ENCODE measurements at regions of chr13 and their contacts with region 1.

Region 1: GRCh38 chr13:99269627-99270241 is 11.6 kb upstream of the GPR18 start:
- DNase-seq: no peak

Region 2: DNA sequence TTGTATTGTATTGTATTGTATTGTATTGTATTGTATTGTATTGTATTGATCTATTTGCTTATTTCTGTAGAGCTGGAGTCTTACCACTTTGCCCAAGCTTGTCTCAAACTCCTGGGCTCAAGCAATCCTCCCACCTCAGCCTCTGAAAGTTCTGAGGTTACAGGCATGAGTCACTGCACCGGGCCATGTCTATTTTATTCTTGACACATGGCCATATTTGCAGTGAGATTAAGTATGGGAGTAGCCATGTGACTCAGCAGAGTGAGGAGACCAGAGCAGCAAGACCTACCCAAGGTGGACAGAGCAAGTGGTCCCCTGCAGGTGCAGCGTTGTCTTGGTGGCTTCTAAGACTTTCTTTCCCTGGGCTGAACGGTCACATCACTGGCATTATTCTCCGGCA is 118.2 kb before region 1 on chr13:
- intact Hi-C with region 1: no loop called
- DNase-seq: no peak

Region 3: DNA sequence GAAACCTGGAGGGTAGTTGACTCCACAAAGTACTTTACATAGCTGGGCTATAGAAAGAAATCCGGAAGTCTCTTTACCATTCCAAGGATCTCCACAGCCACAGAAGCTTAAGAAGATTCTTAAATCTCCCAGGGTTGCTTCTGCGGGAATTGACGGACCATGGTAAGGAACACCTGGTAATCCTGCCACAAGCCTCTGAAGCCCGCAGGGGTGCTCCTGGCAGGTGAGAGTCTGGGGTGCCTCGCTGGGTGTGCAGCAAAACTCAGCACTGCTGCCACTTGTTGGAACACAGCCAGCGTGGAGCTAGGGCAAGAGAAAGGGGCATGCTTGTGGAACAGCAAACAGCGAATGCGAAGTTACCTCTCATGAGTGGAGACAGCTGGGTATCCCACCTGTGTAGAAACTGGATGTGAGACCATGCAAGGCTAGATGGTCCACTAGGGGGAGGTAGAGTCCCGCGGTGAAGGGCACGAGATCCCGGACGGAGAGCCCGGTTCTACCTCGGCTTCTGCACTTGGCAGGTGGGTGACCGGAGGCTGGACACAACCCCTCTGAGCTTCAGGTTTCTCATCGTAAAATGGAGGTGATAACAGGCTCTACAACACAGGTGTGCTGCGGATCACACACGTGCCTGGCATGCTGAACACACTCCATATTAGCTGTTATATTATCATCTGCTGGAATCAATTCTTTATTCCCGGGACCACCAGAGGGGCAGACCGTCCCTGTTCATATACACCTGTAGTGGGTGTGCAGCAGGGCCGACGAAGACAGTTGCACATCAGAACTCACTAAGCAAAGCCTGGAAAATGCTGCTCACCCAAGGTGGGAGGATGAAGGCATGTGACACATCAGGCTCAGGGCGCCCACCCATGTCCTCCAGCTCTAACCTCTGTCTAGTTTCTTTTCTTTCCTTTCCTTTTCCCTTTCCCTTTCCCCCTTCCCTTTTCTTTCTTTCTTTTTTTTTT is 93.1 kb before region 1 on chr13:
- intact Hi-C with region 1: loop called (anchors 2 kb)
- DNase-seq: peak; percentile 83

Region 4: DNA sequence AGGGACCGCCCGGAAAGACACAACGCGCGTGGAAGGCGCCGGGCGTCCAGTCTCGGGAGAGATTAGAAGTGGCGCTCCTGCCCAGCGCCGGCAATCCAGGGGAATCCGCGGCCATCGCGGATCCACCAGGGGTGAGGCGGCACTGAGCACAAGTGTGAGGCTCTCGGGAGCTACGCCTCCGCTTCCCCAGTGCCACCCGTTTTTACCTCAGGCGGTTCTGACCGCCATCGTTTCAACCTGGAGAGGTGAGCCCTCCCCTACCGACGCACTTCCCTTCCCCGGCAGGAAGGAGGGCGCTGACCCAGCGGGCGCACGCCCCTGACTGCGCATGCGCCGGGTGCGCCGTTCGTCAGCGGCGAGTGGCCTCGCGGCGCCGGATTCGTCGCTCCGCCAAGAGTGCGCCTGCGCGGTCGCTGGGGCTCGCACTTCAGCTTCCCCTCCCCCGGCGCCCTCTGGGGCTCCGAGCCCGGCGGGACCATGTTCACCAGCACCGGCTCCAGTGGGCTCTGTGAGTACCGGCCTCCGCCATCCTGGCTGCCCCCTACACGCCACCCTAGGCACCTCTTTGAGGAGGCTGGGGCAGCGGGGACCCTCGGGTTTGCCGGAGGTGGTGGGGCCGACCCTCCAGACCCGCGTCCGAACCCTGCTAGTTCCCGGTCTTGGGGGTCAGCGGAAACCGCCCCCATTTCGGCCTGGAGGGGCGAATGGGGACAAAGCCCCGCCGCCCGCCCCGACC is 69.1 kb before region 1 on chr13 and contains the start of gene UBAC2:
- intact Hi-C with region 1: loop called (anchors 5 kb)
- DNase-seq: peak; percentile 98
- total RNA-seq, gene UBAC2: 61.2 TPM

Region 5: DNA sequence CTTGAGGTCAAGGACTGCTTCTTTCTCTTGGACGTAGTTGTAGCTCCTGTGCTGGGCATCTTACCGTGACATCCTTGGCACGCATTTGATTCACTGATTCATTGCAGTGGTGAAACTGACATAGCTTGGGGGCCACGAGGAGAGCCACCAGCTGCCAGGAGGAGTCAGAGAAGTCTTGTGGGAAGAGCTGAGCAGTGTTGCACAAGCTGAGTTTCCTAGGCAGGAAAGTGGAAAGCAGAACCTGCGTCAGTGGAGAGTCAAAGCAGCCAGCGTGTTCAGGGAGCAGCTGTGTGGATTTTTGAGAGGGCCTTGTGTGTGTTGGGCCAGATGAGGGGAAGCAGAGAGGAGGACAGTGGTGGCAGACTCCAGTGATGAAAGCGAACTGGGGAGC is 42.8 kb after region 1 on chr13:
- intact Hi-C with region 1: no loop called
- DNase-seq: peak; percentile 78

Measured in cardiac septum (tissue), 1 donor.